ENCODE measurements at regions of chr5 and their contacts with region 1.

Region 1: GRCh38 chr5:54217826-54218503 is 92.4 kb downstream of the ARL15 start:
- DNase-seq: no peak
- H3K4me3 ChIP-seq: no peak overlapping the region
- H3K27ac ChIP-seq: no peak overlapping the region
- H3K4me1 ChIP-seq: no peaks in the 10 kb centered on the region
- H3K27me3 ChIP-seq: no peaks in the 10 kb centered on the region
- CTCF ChIP-seq: peak; percentile 73 to 83

Region 2: GRCh38 chr5:53481887-53482716 is 735.9 kb before region 1 on chr5:
- intact Hi-C with region 1: loop called (anchors 5 kb)
- DNase-seq: peak; percentile 77 to 90
- H3K4me3 ChIP-seq: peak overlapping the region; percentile 59 to 74
- H3K27ac ChIP-seq: peak overlapping the region; percentile 58 to 66
- H3K4me1 ChIP-seq: peaks cover 0 to 24% (median 7%) of the 10 kb centered on the region in 4 donors
- H3K27me3 ChIP-seq: no peaks in the 10 kb centered on the region
- CTCF ChIP-seq: peak; percentile 62 to 64

Region 3: GRCh38 chr5:54278031-54278830 is 60.3 kb after region 1 on chr5:
- intact Hi-C with region 1: no loop called
- DNase-seq: no peak
- H3K4me3 ChIP-seq: no peak overlapping the region
- H3K27ac ChIP-seq: no peak overlapping the region
- H3K4me1 ChIP-seq: peaks cover 0 to 4% (median 0%) of the 10 kb centered on the region in 4 donors
- H3K27me3 ChIP-seq: no peaks in the 10 kb centered on the region
- CTCF ChIP-seq: no peak